Activated CD4-positive, alpha-beta memory T cell treated with anti-CD3 and anti-CD28 coated beads, Interleukin-2, amount 10 ng/mL, durations not matched to agents 7 days and 5 days (primary cell): ENCODE measurements at regions of chr5 and their contacts with region 1.

Region 1: GRCh38 chr5:143605403-143606005 is 202.0 kb upstream of the NR3C1 start:
- DNase-seq: peak; percentile 69
- H3K4me3 Mint-ChIP-seq: peak overlapping the region; percentile 69
- H3K27ac Mint-ChIP-seq: peak overlapping the region; percentile 97
- H3K4me1 Mint-ChIP-seq: peaks cover 52% of the 10 kb centered on the region
- H3K27me3 Mint-ChIP-seq: no peaks in the 10 kb centered on the region

Region 2: GRCh38 chr5:143002459-143003328 is 602.8 kb before region 1 on chr5:
- CTCF ChIA-PET with region 1: interaction called, 7 read pairs
- POLR2A ChIA-PET with region 1: interaction called, 15 read pairs
- DNase-seq: peak; percentile 81
- H3K4me3 Mint-ChIP-seq: peak overlapping the region; percentile 41
- H3K27ac Mint-ChIP-seq: peak overlapping the region; percentile 99
- H3K4me1 Mint-ChIP-seq: peaks cover 76% of the 10 kb centered on the region
- H3K27me3 Mint-ChIP-seq: no peaks in the 10 kb centered on the region

Region 3: GRCh38 chr5:143008809-143009521 is 596.5 kb before region 1 on chr5:
- CTCF ChIA-PET with region 1: no interaction called
- POLR2A ChIA-PET with region 1: interaction called, 11 read pairs
- DNase-seq: peak; percentile 89
- H3K4me3 Mint-ChIP-seq: peak overlapping the region; percentile 19
- H3K27ac Mint-ChIP-seq: peak overlapping the region; percentile 70
- H3K4me1 Mint-ChIP-seq: peaks cover 67% of the 10 kb centered on the region
- H3K27me3 Mint-ChIP-seq: no peaks in the 10 kb centered on the region

Region 4: GRCh38 chr5:143585970-143586369 is 19.5 kb before region 1 on chr5:
- CTCF ChIA-PET with region 1: no interaction called
- POLR2A ChIA-PET with region 1: interaction called, 11 read pairs
- DNase-seq: no peak
- H3K4me3 Mint-ChIP-seq: no peak overlapping the region
- H3K27ac Mint-ChIP-seq: peak overlapping the region; percentile 66
- H3K4me1 Mint-ChIP-seq: peaks cover 65% of the 10 kb centered on the region
- H3K27me3 Mint-ChIP-seq: no peaks in the 10 kb centered on the region

Region 5: DNA sequence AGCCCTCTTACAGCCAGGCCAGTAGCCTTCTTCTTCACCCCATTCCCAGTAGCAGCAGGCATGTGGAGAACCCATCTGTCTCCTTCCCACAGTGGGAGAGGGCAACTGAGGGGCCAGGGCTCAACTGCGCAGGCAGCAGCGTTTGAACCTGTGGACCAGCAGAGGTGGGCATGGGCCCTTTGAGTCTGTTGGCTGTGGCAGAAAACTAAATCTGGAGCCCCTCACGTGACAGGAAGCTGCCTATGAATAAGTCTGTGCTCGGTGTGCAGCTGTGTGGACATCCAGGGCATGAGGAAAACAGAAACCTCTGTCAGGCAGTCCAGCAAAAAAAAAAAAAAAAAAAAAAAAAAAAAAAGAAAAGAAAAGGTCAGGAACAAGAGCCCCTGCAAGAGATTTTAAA is 12.9 kb before region 1 on chr5:
- CTCF ChIA-PET with region 1: no interaction called
- POLR2A ChIA-PET with region 1: interaction called, 13 read pairs
- DNase-seq: peak; percentile 47
- H3K4me3 Mint-ChIP-seq: no peak overlapping the region
- H3K27ac Mint-ChIP-seq: no peak overlapping the region
- H3K4me1 Mint-ChIP-seq: peaks cover 63% of the 10 kb centered on the region
- H3K27me3 Mint-ChIP-seq: no peaks in the 10 kb centered on the region

Region 6: GRCh38 chr5:143968011-143968878 is 362.7 kb after region 1 on chr5:
- CTCF ChIA-PET with region 1: no interaction called
- POLR2A ChIA-PET with region 1: no interaction called
- DNase-seq: no peak
- H3K4me3 Mint-ChIP-seq: no peak overlapping the region
- H3K27ac Mint-ChIP-seq: no peak overlapping the region
- H3K4me1 Mint-ChIP-seq: no peaks in the 10 kb centered on the region
- H3K27me3 Mint-ChIP-seq: peaks cover 31% of the 10 kb centered on the region

Region 7: DNA sequence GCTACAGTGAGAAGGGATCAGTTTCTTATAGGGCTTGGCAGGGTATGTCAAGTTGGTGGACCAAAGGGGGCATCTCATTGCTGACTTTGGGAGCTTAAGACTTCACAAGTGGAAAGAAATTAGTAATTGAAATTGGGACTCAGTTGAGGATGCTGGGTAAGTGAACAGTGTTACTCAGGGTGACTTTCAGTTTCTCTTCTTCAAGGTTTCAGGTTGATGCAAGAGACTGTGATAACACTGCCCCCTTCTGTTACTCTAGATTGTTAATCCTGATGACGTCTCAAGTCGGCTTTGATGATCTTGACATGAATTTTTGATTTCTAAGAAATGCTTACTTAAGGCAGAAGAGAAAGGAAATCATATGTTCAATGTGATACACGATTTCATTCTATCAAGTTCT is 586.5 kb after region 1 on chr5:
- CTCF ChIA-PET with region 1: no interaction called
- POLR2A ChIA-PET with region 1: interaction called, 12 read pairs
- DNase-seq: peak; percentile 28
- H3K4me3 Mint-ChIP-seq: no peak overlapping the region
- H3K27ac Mint-ChIP-seq: no peak overlapping the region
- H3K4me1 Mint-ChIP-seq: no peaks in the 10 kb centered on the region
- H3K27me3 Mint-ChIP-seq: peaks cover 3% of the 10 kb centered on the region

Region 8: GRCh38 chr5:145027270-145027669 is 1421.8 kb after region 1 on chr5:
- CTCF ChIA-PET with region 1: no interaction called
- POLR2A ChIA-PET with region 1: no interaction called
- DNase-seq: no peak
- H3K4me3 Mint-ChIP-seq: no peak overlapping the region
- H3K27ac Mint-ChIP-seq: no peak overlapping the region
- H3K4me1 Mint-ChIP-seq: no peaks in the 10 kb centered on the region
- H3K27me3 Mint-ChIP-seq: no peaks in the 10 kb centered on the region